Activated CD8-positive, alpha-beta T cell treated with anti-CD3 and anti-CD28 coated beads for 36 hours (primary cell): ENCODE measurements at regions of chr21 and their contacts with region 1.

Region 1: GRCh38 chr21:33199516-33200217 is 30.1 kb upstream of the IFNAR2 start:
- DNase-seq: peak; percentile 91
- ATAC-seq: peak; percentile 86
- H3K4me3 Mint-ChIP-seq: no peak overlapping the region
- H3K27ac Mint-ChIP-seq: no peak overlapping the region
- H3K4me1 Mint-ChIP-seq: peaks cover 36% of the 10 kb centered on the region
- H3K27me3 Mint-ChIP-seq: no peaks in the 10 kb centered on the region
- CTCF ChIP-seq: peak; percentile 81

Region 2: GRCh38 chr21:32921632-32922230 is 277.9 kb before region 1 on chr21:
- CTCF ChIA-PET with region 1: interaction called, 11 read pairs
- POLR2A ChIA-PET with region 1: no interaction called
- intact Hi-C with region 1: no loop called
- DNase-seq: peak; percentile 67
- ATAC-seq: no peak
- H3K4me3 Mint-ChIP-seq: no peak overlapping the region
- H3K27ac Mint-ChIP-seq: no peak overlapping the region
- H3K4me1 Mint-ChIP-seq: peaks cover 4% of the 10 kb centered on the region
- H3K27me3 Mint-ChIP-seq: no peaks in the 10 kb centered on the region
- CTCF ChIP-seq: peak; percentile 67

Region 3: GRCh38 chr21:33011462-33011861 is 188.2 kb before region 1 on chr21:
- CTCF ChIA-PET with region 1: no interaction called
- POLR2A ChIA-PET with region 1: no interaction called
- intact Hi-C with region 1: no loop called
- DNase-seq: no peak
- ATAC-seq: no peak
- H3K4me3 Mint-ChIP-seq: no peak overlapping the region
- H3K27ac Mint-ChIP-seq: no peak overlapping the region
- H3K4me1 Mint-ChIP-seq: no peaks in the 10 kb centered on the region
- H3K27me3 Mint-ChIP-seq: peaks cover 19% of the 10 kb centered on the region
- CTCF ChIP-seq: no peak

Region 4: GRCh38 chr21:33127154-33127893 is 72.3 kb before region 1 on chr21:
- CTCF ChIA-PET with region 1: interaction called, 18 read pairs
- POLR2A ChIA-PET with region 1: no interaction called
- intact Hi-C with region 1: no loop called
- DNase-seq: peak; percentile 77
- ATAC-seq: peak; percentile 86
- H3K4me3 Mint-ChIP-seq: peak overlapping the region; percentile 60
- H3K27ac Mint-ChIP-seq: no peak overlapping the region
- H3K4me1 Mint-ChIP-seq: peaks cover 4% of the 10 kb centered on the region
- H3K27me3 Mint-ChIP-seq: peaks cover 23% of the 10 kb centered on the region
- CTCF ChIP-seq: peak; percentile 83

Region 5: DNA sequence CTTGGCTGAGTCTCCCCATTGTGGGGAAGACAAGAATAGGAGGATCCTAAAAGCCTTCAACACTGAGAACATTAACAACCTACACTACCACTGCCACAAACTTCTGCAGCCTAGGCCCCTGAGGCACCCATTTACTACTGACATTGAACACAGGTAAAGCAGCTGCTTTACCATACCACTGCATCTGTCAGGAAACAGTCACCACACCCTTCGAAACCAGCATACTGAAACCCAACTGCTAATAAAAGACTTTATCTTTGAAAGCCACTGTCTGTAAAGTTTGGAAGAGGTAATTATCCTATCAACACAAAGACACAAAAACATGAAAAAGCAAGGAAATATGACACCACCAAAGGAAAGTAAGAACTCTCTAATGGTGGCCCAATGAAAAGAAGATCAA is 132.5 kb after region 1 on chr21:
- CTCF ChIA-PET with region 1: interaction called, 15 read pairs
- POLR2A ChIA-PET with region 1: no interaction called
- intact Hi-C with region 1: no loop called
- DNase-seq: no peak
- ATAC-seq: peak; percentile 51
- H3K4me3 Mint-ChIP-seq: no peak overlapping the region
- H3K27ac Mint-ChIP-seq: peak overlapping the region; percentile 14
- H3K4me1 Mint-ChIP-seq: peaks cover 56% of the 10 kb centered on the region
- H3K27me3 Mint-ChIP-seq: no peaks in the 10 kb centered on the region
- CTCF ChIP-seq: no peak

Region 6: DNA sequence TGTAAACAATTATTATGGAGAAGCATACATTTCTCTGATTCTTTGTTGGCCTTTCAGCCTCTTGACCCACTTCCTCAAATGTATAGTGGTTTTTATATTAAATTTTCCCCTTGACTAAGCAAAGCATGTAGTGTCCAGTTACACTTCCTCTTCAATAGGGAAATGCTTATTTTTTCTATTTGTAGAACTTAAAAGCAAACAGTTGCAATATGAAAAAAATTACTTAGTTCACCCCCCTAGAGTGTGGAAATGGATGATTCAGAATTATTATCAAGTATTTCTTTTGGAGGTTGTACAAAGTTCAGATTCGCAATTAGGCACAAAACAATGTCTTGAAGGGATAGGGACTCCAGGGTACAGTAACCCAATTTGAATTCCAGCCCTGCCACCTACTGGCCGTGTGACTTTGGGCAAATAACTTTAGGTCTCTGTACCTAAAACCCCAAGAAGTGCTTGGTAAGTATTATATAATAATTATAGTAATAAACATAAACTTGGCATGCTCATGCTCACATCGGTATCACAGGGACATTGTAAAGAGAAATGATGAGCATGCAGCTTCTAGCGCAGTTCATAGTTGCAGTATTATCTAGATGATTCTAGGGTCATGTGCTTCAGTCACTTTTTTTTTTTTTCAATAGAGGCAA is 174.9 kb after region 1 on chr21:
- CTCF ChIA-PET with region 1: interaction called, 16 read pairs
- POLR2A ChIA-PET with region 1: no interaction called
- intact Hi-C with region 1: no loop called
- DNase-seq: peak; percentile 79
- ATAC-seq: peak; percentile 81
- H3K4me3 Mint-ChIP-seq: no peak overlapping the region
- H3K27ac Mint-ChIP-seq: no peak overlapping the region
- H3K4me1 Mint-ChIP-seq: peaks cover 12% of the 10 kb centered on the region
- H3K27me3 Mint-ChIP-seq: no peaks in the 10 kb centered on the region
- CTCF ChIP-seq: peak; percentile 71

Region 7: DNA sequence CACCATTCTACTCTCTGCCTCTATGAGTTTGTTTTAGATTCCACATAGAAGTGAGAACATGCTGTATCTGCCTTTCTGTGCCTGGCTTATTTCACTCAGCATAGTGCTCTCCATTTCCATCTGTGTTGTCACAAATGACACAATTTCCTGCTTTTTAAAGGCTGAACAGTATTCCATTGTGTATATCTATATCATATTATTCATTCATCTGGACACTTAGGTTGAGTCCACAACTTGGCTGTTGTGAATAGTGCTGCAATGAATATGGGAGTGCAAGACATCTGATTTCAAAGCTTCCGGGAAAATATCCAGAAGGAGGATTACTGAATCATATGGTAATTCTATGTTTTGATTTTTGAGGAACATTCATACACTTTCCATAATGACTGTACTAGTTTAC is 408.9 kb after region 1 on chr21:
- CTCF ChIA-PET with region 1: interaction called, 12 read pairs
- POLR2A ChIA-PET with region 1: no interaction called
- intact Hi-C with region 1: no loop called
- DNase-seq: no peak
- ATAC-seq: no peak
- H3K4me3 Mint-ChIP-seq: no peak overlapping the region
- H3K27ac Mint-ChIP-seq: peak overlapping the region; percentile 9
- H3K4me1 Mint-ChIP-seq: peaks cover 4% of the 10 kb centered on the region
- H3K27me3 Mint-ChIP-seq: no peaks in the 10 kb centered on the region
- CTCF ChIP-seq: no peak